Sigmoid colon (tissue), 7 donors: ENCODE measurements at regions of chr22 and their contacts with region 1.

Region 1: DNA sequence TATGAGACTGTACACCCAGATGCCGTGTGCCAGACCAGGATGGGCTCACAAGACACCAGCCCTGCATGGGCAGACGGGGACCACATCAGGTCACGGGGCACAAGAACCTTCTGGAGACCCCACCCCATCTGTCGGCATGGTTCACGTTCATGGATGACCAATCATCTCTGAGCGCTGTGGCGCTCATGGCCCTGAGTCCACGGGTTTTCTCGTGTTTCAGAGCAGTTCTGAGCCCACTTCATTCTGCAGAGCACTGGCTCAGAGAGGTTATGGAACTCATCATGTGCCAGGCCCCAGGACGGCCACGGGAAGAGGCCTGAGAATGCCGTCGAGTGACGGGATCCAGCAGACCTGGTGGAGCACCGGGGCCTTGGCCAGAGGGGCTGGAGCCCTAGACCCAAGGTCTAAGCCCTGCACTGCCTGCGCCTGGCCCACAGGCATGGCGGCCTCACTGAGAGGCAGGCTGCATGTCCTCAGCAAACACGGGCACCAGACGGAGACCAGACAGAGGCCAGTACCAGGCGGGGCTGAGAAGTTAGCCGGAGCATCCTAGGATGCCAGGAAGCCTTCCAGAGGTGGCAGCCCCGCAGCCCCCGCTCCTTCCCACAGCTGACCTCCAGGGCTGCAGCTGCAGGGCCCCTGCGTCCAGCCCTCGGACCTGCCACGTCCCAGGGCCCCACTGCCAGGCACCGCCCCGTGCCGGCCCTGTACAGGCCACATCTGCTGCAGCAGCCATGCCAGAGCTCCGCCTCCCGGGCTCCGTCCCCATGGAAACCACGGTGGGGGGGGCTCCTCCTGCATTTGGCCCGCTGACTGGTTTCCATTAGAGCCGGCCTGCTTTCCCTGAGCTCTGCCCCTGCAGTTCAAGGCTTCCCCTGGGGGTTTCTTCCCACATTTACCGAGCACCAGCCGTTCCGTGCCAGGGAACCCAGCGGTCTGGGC is 62.7 kb upstream of the PPARA start:
- DNase-seq: peak; percentile 98
- H3K4me3 ChIP-seq: peak overlapping the region in 3 of 4 donors; percentile 20 to 33 (median 32)
- H3K27ac ChIP-seq: peak overlapping the region; percentile 96 to 99 (median 98)
- H3K4me1 ChIP-seq: peaks cover 0 to 100% (median 100%) of the 10 kb centered on the region in 4 donors
- H3K27me3 ChIP-seq: no peaks in the 10 kb centered on the region
- CTCF ChIP-seq: no peak
- EP300 ChIP-seq: peak in 1 of 4 donors; percentile 11
- POLR2A ChIP-seq: peak in 1 of 2 donors; percentile 4

Region 2: GRCh38 chr22:45977003-45977411 is 110.6 kb before region 1 on chr22 and contains the start of gene WNT7B:
- intact Hi-C with region 1: no loop called
- DNase-seq: no peak
- H3K4me3 ChIP-seq: peak within 1 kb of the TSS in 3 of 4 donors; percentile 12 to 35 (median 27)
- H3K27ac ChIP-seq: no peak within 1 kb of the TSS
- H3K4me1 ChIP-seq: peaks cover 0 to 47% (median 36%) of the 10 kb centered on the region in 4 donors
- H3K27me3 ChIP-seq: peaks cover 47 to 70% (median 68%) of the 10 kb centered on the region in 3 donors
- CTCF ChIP-seq: no peak
- EP300 ChIP-seq: no peak
- POLR2A ChIP-seq: no peak
- total RNA-seq, gene WNT7B: not detected

Region 3: GRCh38 chr22:46013460-46014416 is 73.9 kb before region 1 on chr22:
- intact Hi-C with region 1: loop called (anchors 5 kb)
- DNase-seq: peak; percentile 98
- H3K4me3 ChIP-seq: peak overlapping the region; percentile 48 to 74 (median 59)
- H3K27ac ChIP-seq: peak overlapping the region; percentile 87 to 99 (median 96)
- H3K4me1 ChIP-seq: peaks cover 0 to 31% (median 22%) of the 10 kb centered on the region in 4 donors
- H3K27me3 ChIP-seq: no peaks in the 10 kb centered on the region
- CTCF ChIP-seq: peak; percentile 45 to 74 (median 68)
- EP300 ChIP-seq: peak in 2 of 4 donors; percentile 2 to 46
- POLR2A ChIP-seq: peak; percentile 59 to 71

Region 4: DNA sequence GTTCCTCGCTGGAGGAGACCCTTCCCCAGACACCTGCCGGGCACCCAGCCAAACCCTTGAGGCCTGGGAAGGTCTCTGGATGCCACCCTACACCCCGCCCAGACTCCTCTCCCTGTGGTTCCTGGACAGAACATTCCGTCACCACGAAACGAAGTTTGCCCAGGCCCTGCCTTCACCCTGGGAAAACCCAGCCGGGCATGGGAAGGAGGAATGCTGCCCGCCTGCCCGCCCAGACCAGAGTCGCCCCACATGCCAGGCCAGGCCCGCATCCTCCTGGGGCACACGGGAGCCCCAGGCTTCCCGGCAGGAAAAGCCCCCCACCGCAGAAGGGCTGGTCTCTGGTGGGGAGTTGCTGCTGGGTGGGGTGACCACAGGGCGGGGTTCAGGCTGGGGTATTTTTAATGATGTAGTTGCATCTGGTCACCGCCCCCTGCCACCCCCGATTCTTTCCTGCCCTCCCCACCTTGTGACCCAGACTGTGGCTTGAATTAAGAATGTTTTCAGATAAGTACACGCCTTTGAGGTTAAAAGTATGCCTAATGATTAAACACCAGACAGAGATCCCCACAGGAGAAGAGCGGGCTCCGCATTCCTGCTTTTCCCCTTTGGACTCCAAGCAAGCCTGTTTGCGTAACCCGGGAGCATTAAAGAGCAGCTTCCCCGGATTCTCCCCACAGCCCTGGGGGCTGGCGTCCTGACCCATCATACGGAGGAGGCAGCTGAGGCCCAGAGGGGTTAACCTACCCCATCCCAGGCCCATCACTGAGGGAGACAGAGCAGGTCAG is 18.1 kb after region 1 on chr22:
- intact Hi-C with region 1: loop called (anchors 2 kb)
- DNase-seq: peak; percentile 86
- H3K4me3 ChIP-seq: no peak overlapping the region
- H3K27ac ChIP-seq: peak overlapping the region; percentile 74 to 92 (median 86)
- H3K4me1 ChIP-seq: peaks cover 0 to 95% (median 90%) of the 10 kb centered on the region in 4 donors
- H3K27me3 ChIP-seq: no peaks in the 10 kb centered on the region
- CTCF ChIP-seq: no peak
- EP300 ChIP-seq: peak in 1 of 4 donors; percentile 48
- POLR2A ChIP-seq: no peak